Right ventricle myocardium inferior (tissue), 1 donor: ENCODE measurements at regions of chr5 and their contacts with region 1.

Region 1: GRCh38 chr5:57499262-57500050 is 16.8 kb upstream of the ACTBL2 start:
- DNase-seq: no peak
- ATAC-seq: peak; percentile 59

Region 2: GRCh38 chr5:57097526-57097925 is 401.9 kb before region 1 on chr5:
- intact Hi-C with region 1: no loop called
- DNase-seq: no peak
- ATAC-seq: no peak

Region 3: GRCh38 chr5:57662991-57663390 is 163.5 kb after region 1 on chr5:
- intact Hi-C with region 1: loop called (anchors 2 kb)
- DNase-seq: no peak
- ATAC-seq: peak; percentile 88

Region 4: DNA sequence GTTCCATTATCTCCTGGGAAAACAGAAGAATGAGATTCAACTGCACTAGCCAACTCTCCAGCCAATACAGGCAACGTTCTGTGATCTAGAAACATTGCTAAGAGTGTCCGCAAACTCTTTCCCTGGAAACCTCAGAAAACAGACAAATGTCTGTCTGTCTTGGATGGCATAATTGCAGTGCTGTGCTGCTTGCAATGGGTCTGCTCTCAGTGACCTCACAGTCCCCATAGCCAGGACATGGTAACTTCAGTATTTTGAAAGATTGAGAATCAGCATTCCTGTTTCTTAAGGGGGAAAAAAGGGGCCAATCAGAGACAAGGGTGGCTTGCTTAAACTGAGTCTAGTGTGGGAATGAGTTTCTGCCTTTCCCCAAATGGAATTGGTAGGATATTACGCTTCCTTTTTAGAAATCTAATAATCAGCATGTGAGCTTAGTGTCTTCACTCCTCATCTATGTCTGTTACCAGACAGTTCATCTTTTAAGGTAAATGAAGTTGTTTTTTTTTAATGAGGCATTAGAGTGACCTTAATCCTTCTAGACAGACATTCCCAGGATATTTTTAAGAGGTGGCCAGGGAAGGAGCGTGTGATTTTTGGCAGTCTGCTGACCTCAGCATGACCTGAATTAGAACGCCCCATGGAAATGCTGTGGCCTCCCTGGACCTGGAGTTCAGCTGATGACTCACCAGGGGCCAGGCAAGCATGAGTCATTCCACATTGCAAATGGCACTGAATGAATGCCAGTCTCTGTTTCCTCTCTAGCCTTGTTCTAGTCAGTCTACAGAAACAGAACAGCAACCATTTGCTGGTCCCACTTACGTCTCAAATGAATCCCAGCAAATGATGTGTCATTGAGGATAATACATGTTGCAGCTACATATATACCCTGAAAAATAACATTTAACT is 193.4 kb after region 1 on chr5:
- intact Hi-C with region 1: loop called (anchors 10 kb)
- DNase-seq: peak; percentile 78
- ATAC-seq: peak; percentile 81

Region 5: DNA sequence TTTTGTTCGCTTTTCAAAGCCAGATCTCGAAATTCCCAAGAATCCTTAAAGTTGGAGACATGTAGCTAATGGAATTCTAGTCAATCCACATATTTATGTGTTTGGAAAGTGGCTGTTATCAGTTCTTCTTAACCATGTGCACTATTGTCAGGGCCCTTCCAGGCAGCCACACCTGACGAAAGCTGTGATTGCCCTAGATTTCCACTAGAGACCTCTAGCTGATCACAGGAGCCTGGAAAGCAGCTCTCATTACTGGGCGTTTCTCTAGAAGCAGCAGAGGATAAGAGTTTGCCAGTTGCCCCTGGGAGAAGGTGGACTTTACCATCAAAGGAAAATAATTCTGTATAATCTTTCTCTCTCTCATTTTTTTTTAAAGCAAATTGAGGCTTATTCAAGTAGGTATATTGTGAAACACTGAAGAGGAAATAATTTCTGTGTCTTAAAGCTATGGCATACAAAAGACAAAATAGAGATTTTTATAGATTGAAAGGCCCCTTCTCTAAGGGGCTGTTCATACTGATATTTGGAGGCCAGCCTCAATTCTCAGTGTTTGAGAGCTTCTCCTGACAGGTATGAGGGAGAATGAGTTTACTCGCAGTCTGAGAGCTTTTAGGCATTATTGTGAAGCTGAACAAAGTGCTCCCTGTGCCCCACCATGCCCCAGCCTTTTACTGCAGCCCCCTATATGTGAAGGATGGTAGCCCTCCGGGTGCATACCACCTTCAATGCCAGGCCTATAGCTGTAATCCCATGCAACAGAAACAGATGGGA is 388.6 kb after region 1 on chr5:
- intact Hi-C with region 1: loop called (anchors 1 kb)
- DNase-seq: no peak
- ATAC-seq: peak; percentile 78